Calu3 (cell line): ENCODE measurements at regions of chr20 and their contacts with region 1.

Region 1: GRCh38 chr20:48180958-48181941 is 396.0 kb upstream of the SULF2 start:
- DNase-seq: no peak
- H3K4me3 Mint-ChIP-seq: no peak overlapping the region
- H3K27ac Mint-ChIP-seq: peak overlapping the region; percentile 34
- H3K4me1 Mint-ChIP-seq: peaks cover 26% of the 10 kb centered on the region
- H3K27me3 Mint-ChIP-seq: no peaks in the 10 kb centered on the region
- CTCF ChIP-seq: no peak

Region 2: GRCh38 chr20:47941414-47941813 is 239.8 kb before region 1 on chr20:
- CTCF ChIA-PET with region 1: interaction called, 12 read pairs
- intact Hi-C with region 1: no loop called
- DNase-seq: no peak
- H3K4me3 Mint-ChIP-seq: no peak overlapping the region
- H3K27ac Mint-ChIP-seq: no peak overlapping the region
- H3K4me1 Mint-ChIP-seq: peaks cover 8% of the 10 kb centered on the region
- H3K27me3 Mint-ChIP-seq: peaks cover 13% of the 10 kb centered on the region
- CTCF ChIP-seq: no peak

Region 3: GRCh38 chr20:48139262-48139987 is 41.8 kb before region 1 on chr20:
- CTCF ChIA-PET with region 1: no interaction called
- intact Hi-C with region 1: no loop called
- DNase-seq: no peak
- H3K4me3 Mint-ChIP-seq: no peak overlapping the region
- H3K27ac Mint-ChIP-seq: no peak overlapping the region
- H3K4me1 Mint-ChIP-seq: peaks cover 9% of the 10 kb centered on the region
- H3K27me3 Mint-ChIP-seq: peaks cover 58% of the 10 kb centered on the region
- CTCF ChIP-seq: no peak